A673 (cell line): ENCODE measurements at regions of chr6 and their contacts with region 1.

Region 1: DNA sequence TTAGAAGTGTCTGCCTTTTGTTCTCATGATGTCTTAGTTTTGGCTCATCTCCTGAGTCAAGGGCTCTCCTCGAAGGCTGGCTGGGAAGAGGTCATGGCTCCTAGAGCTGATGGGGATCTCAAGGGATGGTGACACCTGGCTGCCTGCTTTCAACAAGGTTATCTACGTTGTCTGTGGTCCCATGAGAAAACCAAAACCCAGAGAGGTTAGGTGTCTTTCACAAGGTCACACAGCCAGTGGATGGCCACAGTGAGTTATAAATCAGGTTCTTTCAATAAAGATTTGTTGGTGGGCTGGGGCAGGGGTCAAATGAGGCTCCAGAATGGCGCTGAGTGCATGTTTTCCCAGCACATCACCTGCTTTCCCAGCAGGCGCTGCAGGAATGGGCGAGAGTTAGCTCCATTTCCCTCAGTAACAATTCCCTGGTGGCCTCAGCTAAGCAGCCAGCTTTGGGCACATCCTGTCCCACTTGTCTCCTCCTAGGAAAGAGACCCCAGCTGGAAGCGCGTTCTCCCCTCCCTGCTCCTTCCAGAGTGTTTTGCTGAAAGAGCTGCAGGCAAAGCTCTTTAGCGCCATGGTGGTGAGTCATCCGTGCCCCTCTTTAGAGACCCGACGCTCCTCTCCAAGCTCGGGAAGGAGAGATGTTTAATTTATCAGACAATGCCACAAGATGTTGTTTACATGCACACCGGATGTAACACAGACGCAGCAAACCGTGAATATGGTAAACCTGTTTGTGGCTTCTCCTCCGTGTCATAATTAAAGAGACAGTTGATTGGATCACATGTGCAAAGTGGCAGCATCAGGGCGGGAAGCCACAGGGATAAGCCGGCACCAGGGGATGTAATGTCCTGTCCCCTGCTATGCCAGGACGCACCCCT is 109.7 kb downstream of the LRFN2 start:
- DNase-seq: peak; percentile 99
- H3K4me3 ChIP-seq: peak overlapping the region; percentile 3
- H3K27ac ChIP-seq: peak overlapping the region; percentile 86
- H3K4me1 ChIP-seq: peaks cover 67% of the 10 kb centered on the region
- H3K27me3 ChIP-seq: no peaks in the 10 kb centered on the region
- CTCF ChIP-seq: peak; percentile 44

Region 2: DNA sequence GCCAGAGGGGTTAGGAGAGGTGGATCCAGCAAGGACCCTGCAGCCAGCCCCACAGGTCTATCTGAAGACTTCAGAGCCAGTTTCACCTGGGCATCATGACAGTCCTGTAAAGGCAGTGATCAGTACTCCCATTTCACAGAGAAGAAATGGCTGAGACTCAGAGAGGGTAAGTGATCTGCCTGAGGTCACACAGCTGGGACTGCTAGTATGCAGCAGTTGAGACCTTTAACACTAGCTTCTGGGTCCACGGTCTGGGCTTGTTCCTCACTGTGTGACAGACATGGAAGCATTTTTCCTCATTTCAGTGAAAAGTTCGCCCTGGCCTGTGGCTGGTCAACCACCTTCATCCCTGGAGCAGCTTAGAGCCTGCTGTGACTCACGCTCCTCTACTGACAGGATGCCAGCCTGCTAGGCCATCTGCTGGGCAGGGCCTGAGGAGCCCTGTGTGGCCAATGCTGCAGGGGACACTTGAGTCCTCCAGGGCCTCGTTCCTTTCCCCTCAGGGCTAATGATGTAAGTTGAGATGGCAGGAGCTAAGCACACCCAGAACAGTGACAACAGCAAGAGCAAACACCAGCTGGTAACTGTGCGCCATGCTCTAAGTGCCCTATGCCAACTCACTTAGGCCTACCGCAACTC is 82.3 kb before region 1 on chr6:
- CTCF ChIA-PET with region 1: no interaction called
- POLR2A ChIA-PET with region 1: no interaction called
- intact Hi-C with region 1: no loop called
- DNase-seq: no peak
- H3K4me3 ChIP-seq: no peak overlapping the region
- H3K27ac ChIP-seq: no peak overlapping the region
- H3K4me1 ChIP-seq: peaks cover 5% of the 10 kb centered on the region
- H3K27me3 ChIP-seq: no peaks in the 10 kb centered on the region
- CTCF ChIP-seq: no peak

Region 3: GRCh38 chr6:40440053-40440452 is 37.4 kb before region 1 on chr6:
- CTCF ChIA-PET with region 1: no interaction called
- POLR2A ChIA-PET with region 1: interaction called, 3 read pairs
- intact Hi-C with region 1: loop called (anchors 2 kb)
- DNase-seq: peak; percentile 68
- H3K4me3 ChIP-seq: no peak overlapping the region
- H3K27ac ChIP-seq: peak overlapping the region; percentile 86
- H3K4me1 ChIP-seq: peaks cover 88% of the 10 kb centered on the region
- H3K27me3 ChIP-seq: no peaks in the 10 kb centered on the region
- CTCF ChIP-seq: no peak

Region 4: DNA sequence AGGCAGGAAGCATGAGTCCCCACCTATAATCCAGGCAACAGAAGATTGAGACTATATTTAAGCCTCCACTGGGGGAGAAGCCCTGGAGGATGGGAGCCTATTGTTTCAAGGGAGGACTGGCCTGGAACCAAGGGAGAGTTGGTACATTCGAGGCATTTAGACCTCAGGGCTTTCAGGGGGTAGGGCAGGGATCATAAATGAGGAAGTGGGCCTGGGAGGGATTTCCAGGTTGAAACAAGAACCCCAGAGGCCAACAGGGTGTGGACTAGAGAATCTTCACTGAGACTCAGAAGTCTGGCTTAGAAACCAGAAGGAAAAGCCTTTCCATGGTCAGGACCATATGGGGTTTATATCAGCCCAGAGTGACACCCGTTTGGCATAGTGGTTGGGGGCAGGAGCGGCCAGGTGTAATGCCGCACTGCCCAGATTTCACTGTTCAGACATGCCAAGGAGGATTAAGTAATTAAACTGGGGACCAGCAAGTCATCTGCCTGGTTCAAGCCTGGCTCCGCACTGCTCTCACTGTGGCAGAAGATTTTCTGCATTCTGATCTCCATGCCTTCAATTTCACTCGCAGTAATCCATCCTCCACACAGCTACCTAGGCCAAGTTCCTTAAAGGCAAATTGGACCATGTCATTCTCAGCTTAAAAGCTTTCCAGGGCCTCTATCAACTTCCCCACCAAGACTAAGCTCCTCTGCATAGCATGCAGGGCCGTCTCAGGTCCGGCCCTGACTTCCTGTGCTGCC is 91.8 kb after region 1 on chr6:
- CTCF ChIA-PET with region 1: interaction called, 4 read pairs
- POLR2A ChIA-PET with region 1: no interaction called
- intact Hi-C with region 1: loop called (anchors 1 kb)
- DNase-seq: peak; percentile 58
- H3K4me3 ChIP-seq: no peak overlapping the region
- H3K27ac ChIP-seq: peak overlapping the region; percentile 99
- H3K4me1 ChIP-seq: peaks cover 73% of the 10 kb centered on the region
- H3K27me3 ChIP-seq: no peaks in the 10 kb centered on the region
- CTCF ChIP-seq: no peak

Region 5: DNA sequence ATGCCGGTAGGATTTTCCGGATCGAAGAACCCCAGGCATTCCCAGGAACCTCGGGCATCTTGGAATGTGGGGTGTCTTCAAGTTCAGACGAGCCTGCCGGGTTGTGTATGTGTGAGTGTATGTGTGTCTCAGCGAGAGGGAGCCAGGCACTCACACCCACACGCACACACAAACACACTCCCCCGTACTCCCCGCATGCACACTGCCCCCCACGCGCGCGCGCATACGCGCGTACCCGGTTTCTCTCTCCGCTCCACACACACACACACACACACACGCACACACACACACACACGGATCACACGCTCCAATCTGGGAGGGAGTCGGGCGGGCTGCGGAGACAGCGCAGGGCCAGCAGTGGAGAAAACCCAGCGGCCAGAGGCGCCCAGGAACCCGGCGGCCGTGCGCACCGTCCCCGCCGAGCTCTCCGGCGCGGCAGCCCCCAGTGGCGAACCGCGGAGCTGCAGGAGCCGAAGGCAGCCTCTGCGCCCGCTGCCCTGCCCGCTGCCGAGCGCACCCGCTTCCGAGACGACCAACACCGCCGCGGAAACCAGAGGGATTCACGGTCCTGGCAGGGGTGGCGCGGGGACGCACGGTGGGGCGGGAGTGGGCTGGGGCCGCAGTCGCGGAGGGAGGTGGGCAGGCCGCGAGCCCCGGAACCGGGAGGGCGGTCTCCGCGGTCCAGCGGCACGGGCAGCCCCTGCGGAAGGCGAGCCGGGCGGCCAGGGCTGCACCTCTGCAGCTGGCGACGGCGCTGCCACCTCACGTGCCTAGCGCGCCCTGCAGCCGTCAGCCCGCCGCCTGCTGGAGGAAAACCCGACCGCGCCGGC is 110.0 kb after region 1 on chr6 and contains the start of gene LRFN2:
- CTCF ChIA-PET with region 1: interaction called, 3 read pairs
- POLR2A ChIA-PET with region 1: no interaction called
- intact Hi-C with region 1: loop called (anchors 5 kb)
- DNase-seq: peak; percentile 93
- H3K4me3 ChIP-seq: peak within 1 kb of the TSS; percentile 90
- H3K27ac ChIP-seq: peak within 1 kb of the TSS; percentile 89
- H3K4me1 ChIP-seq: peaks cover 35% of the 10 kb centered on the region
- H3K27me3 ChIP-seq: no peaks in the 10 kb centered on the region
- CTCF ChIP-seq: peak; percentile 68
- total RNA-seq, gene LRFN2: 22.3 and 26.6 TPM in 2 replicates

Region 6: DNA sequence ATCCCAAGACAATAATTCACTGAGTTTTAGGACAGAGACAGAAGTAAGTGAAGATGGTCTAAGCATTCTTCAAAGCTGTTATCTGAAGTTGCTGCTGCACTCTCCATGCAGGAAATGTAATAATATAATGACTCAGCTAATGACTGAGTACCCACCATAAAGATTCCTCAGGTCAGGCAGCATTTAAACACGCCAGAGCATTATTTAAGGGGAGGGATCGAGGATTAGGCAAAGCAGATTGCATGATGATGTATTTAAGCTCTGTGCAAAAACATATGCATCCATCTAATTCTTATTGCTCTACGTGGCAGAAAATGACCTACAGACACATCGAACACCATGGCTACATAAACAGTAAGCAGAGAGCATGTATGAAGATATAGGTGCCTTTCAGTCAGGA is 345.1 kb after region 1 on chr6:
- CTCF ChIA-PET with region 1: no interaction called
- POLR2A ChIA-PET with region 1: no interaction called
- intact Hi-C with region 1: loop called (anchors 2 kb)
- DNase-seq: peak; percentile 86
- H3K4me3 ChIP-seq: no peak overlapping the region
- H3K27ac ChIP-seq: peak overlapping the region; percentile 68
- H3K4me1 ChIP-seq: peaks cover 41% of the 10 kb centered on the region
- H3K27me3 ChIP-seq: no peaks in the 10 kb centered on the region
- CTCF ChIP-seq: no peak